Activated naive CD4-positive, alpha-beta T cell treated with anti-CD3 and anti-CD28 coated beads for 36 hours (primary cell): ENCODE measurements at regions of chr11 and their contacts with region 1.

Region 1: GRCh38 chr11:17384002-17384511 is 4.4 kb downstream of the KCNJ11 start:
- DNase-seq: peak; percentile 88
- H3K4me3 Mint-ChIP-seq: no peak overlapping the region
- H3K27ac Mint-ChIP-seq: no peak overlapping the region
- H3K4me1 Mint-ChIP-seq: peaks cover 2% of the 10 kb centered on the region
- H3K27me3 Mint-ChIP-seq: no peaks in the 10 kb centered on the region

Region 2: GRCh38 chr11:16945671-16946469 is 438.2 kb before region 1 on chr11:
- CTCF ChIA-PET with region 1: interaction called, 3 read pairs
- intact Hi-C with region 1: loop called (anchors 5 kb)
- DNase-seq: peak; percentile 70
- H3K4me3 Mint-ChIP-seq: no peak overlapping the region
- H3K27ac Mint-ChIP-seq: no peak overlapping the region
- H3K4me1 Mint-ChIP-seq: peaks cover 3% of the 10 kb centered on the region
- H3K27me3 Mint-ChIP-seq: no peaks in the 10 kb centered on the region

Region 3: GRCh38 chr11:17366495-17366894 is 17.6 kb before region 1 on chr11:
- CTCF ChIA-PET with region 1: interaction called, 10 read pairs
- intact Hi-C with region 1: no loop called
- DNase-seq: no peak
- H3K4me3 Mint-ChIP-seq: no peak overlapping the region
- H3K27ac Mint-ChIP-seq: no peak overlapping the region
- H3K4me1 Mint-ChIP-seq: no peaks in the 10 kb centered on the region
- H3K27me3 Mint-ChIP-seq: no peaks in the 10 kb centered on the region

Region 4: DNA sequence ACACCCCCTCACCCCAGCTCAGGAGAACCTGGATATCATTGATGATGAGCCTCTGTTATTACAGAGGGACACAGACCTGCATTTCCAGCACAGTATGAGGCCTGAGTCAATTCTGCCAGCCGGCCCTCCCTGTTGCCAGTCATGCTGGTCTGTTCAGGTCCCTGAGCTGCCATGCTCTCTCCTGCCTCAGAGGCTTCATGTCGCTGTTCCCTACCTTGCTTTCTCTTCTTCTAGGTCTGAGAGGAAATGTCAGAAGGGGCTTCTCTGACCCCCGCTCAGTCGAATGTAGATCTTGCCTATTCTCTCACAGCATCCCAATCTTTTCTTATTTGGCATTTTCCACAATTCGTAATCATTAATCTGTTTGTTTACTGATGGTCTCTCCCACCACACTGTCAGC is 114.4 kb after region 1 on chr11:
- CTCF ChIA-PET with region 1: interaction called, 92 read pairs
- intact Hi-C with region 1: no loop called
- DNase-seq: no peak
- H3K4me3 Mint-ChIP-seq: no peak overlapping the region
- H3K27ac Mint-ChIP-seq: no peak overlapping the region
- H3K4me1 Mint-ChIP-seq: no peaks in the 10 kb centered on the region
- H3K27me3 Mint-ChIP-seq: no peaks in the 10 kb centered on the region

Region 5: GRCh38 chr11:17504330-17505107 is 120.5 kb after region 1 on chr11:
- CTCF ChIA-PET with region 1: interaction called, 92 read pairs
- intact Hi-C with region 1: loop called (anchors 1 kb)
- DNase-seq: peak; percentile 85
- H3K4me3 Mint-ChIP-seq: no peak overlapping the region
- H3K27ac Mint-ChIP-seq: no peak overlapping the region
- H3K4me1 Mint-ChIP-seq: no peaks in the 10 kb centered on the region
- H3K27me3 Mint-ChIP-seq: peaks cover 4% of the 10 kb centered on the region

Region 6: GRCh38 chr11:17528181-17528691 is 144.2 kb after region 1 on chr11:
- CTCF ChIA-PET with region 1: interaction called, 41 read pairs
- intact Hi-C with region 1: loop called (anchors 1 kb)
- DNase-seq: peak; percentile 68
- H3K4me3 Mint-ChIP-seq: no peak overlapping the region
- H3K27ac Mint-ChIP-seq: no peak overlapping the region
- H3K4me1 Mint-ChIP-seq: no peaks in the 10 kb centered on the region
- H3K27me3 Mint-ChIP-seq: no peaks in the 10 kb centered on the region

Region 7: GRCh38 chr11:17978553-17979287 is 594.7 kb after region 1 on chr11:
- CTCF ChIA-PET with region 1: no interaction called
- intact Hi-C with region 1: loop called (anchors 10 kb)
- DNase-seq: peak; percentile 36
- H3K4me3 Mint-ChIP-seq: no peak overlapping the region
- H3K27ac Mint-ChIP-seq: no peak overlapping the region
- H3K4me1 Mint-ChIP-seq: no peaks in the 10 kb centered on the region
- H3K27me3 Mint-ChIP-seq: no peaks in the 10 kb centered on the region